Activated CD4-positive, alpha-beta T cell treated with anti-CD3 and anti-CD28 coated beads, Interleukin-2, amount 10 ng/mL, durations not matched to agents 7 days and 5 days (primary cell): ENCODE measurements at regions of chr19 and their contacts with region 1.

Region 1: GRCh38 chr19:51393959-51394836 is 3.8 kb upstream of the C19orf84 start:
- DNase-seq: peak; percentile 97
- H3K4me3 Mint-ChIP-seq: peak overlapping the region; percentile 89
- H3K27ac Mint-ChIP-seq: peak overlapping the region; percentile 94
- H3K4me1 Mint-ChIP-seq: peaks cover 51% of the 10 kb centered on the region
- H3K27me3 Mint-ChIP-seq: no peaks in the 10 kb centered on the region

Region 2: GRCh38 chr19:51367565-51368365 is 26.4 kb before region 1 on chr19:
- CTCF ChIA-PET with region 1: interaction called, 13 read pairs
- POLR2A ChIA-PET with region 1: interaction called, 13 read pairs
- DNase-seq: peak; percentile 96
- H3K4me3 Mint-ChIP-seq: peak overlapping the region; percentile 99
- H3K27ac Mint-ChIP-seq: peak overlapping the region; percentile 95
- H3K4me1 Mint-ChIP-seq: peaks cover 75% of the 10 kb centered on the region
- H3K27me3 Mint-ChIP-seq: no peaks in the 10 kb centered on the region

Region 3: GRCh38 chr19:51407511-51408131 is 13.4 kb after region 1 on chr19:
- CTCF ChIA-PET with region 1: interaction called, 16 read pairs
- POLR2A ChIA-PET with region 1: no interaction called
- DNase-seq: peak; percentile 27
- H3K4me3 Mint-ChIP-seq: no peak overlapping the region
- H3K27ac Mint-ChIP-seq: no peak overlapping the region
- H3K4me1 Mint-ChIP-seq: peaks cover 5% of the 10 kb centered on the region
- H3K27me3 Mint-ChIP-seq: no peaks in the 10 kb centered on the region

Region 4: GRCh38 chr19:51681321-51682168 is 287.3 kb after region 1 on chr19:
- CTCF ChIA-PET with region 1: no interaction called
- POLR2A ChIA-PET with region 1: interaction called, 15 read pairs
- DNase-seq: no peak
- H3K4me3 Mint-ChIP-seq: no peak overlapping the region
- H3K27ac Mint-ChIP-seq: no peak overlapping the region
- H3K4me1 Mint-ChIP-seq: peaks cover 4% of the 10 kb centered on the region
- H3K27me3 Mint-ChIP-seq: peaks cover 2% of the 10 kb centered on the region